Activated CD8-positive, alpha-beta memory T cell treated with anti-CD3 and anti-CD28 coated beads, Interleukin-2, amount 10 ng/mL, durations not matched to agents 7 days and 5 days (primary cell): ENCODE measurements at regions of chr12 and their contacts with region 1.

Region 1: GRCh38 chr12:64801381-64801780 is 23.1 kb upstream of the TBC1D30 start:
- DNase-seq: no peak
- ATAC-seq: no peak
- H3K4me3 Mint-ChIP-seq: no peak overlapping the region
- H3K27ac Mint-ChIP-seq: no peak overlapping the region
- H3K4me1 Mint-ChIP-seq: peaks cover 2% of the 10 kb centered on the region
- H3K27me3 Mint-ChIP-seq: peaks cover 29% of the 10 kb centered on the region

Region 2: DNA sequence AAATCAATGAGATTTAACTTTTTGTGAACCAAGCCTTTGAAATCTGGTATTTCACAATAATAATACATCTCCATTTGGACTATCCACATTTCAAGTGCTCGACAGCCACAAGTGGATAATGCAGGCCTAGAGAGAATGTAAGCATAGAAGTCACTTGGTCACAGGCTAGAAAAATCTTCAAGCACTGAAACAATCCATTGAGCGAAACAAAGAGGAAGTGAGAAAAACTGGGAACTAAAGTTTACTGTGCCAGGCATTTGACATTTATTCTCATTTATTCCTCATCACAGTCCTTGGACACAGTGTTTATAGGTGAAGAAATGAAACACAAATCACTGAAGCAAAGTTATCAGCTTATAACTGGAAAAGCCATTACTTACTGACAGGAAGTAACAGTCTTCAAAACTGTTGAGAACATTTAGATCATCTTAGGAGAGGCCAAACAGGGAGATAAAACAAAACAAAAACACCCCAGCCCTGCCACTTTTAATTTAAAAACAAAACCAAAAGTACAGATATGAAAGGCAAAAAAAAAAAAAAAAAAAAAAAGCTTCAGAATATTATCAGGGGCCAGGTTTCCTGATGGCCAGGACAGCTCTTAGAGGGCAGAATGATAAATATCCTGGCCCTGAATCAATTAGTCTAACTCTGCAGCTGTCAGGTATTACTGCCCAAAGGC is 71.3 kb before region 1 on chr12:
- CTCF ChIA-PET with region 1: no interaction called
- DNase-seq: no peak
- ATAC-seq: peak; percentile 71
- H3K4me3 Mint-ChIP-seq: peak overlapping the region; percentile 27
- H3K27ac Mint-ChIP-seq: peak overlapping the region; percentile 85
- H3K4me1 Mint-ChIP-seq: peaks cover 15% of the 10 kb centered on the region
- H3K27me3 Mint-ChIP-seq: no peaks in the 10 kb centered on the region

Region 3: GRCh38 chr12:64742416-64742815 is 59.0 kb before region 1 on chr12:
- CTCF ChIA-PET with region 1: no interaction called
- DNase-seq: no peak
- ATAC-seq: no peak
- H3K4me3 Mint-ChIP-seq: no peak overlapping the region
- H3K27ac Mint-ChIP-seq: no peak overlapping the region
- H3K4me1 Mint-ChIP-seq: peaks cover 8% of the 10 kb centered on the region
- H3K27me3 Mint-ChIP-seq: no peaks in the 10 kb centered on the region

Region 4: GRCh38 chr12:64780531-64781279 is 20.7 kb before region 1 on chr12:
- CTCF ChIA-PET with region 1: interaction called, 16 read pairs
- DNase-seq: no peak
- ATAC-seq: peak; percentile 67
- H3K4me3 Mint-ChIP-seq: peak overlapping the region; percentile 57
- H3K27ac Mint-ChIP-seq: no peak overlapping the region
- H3K4me1 Mint-ChIP-seq: peaks cover 11% of the 10 kb centered on the region
- H3K27me3 Mint-ChIP-seq: peaks cover 80% of the 10 kb centered on the region

Region 5: DNA sequence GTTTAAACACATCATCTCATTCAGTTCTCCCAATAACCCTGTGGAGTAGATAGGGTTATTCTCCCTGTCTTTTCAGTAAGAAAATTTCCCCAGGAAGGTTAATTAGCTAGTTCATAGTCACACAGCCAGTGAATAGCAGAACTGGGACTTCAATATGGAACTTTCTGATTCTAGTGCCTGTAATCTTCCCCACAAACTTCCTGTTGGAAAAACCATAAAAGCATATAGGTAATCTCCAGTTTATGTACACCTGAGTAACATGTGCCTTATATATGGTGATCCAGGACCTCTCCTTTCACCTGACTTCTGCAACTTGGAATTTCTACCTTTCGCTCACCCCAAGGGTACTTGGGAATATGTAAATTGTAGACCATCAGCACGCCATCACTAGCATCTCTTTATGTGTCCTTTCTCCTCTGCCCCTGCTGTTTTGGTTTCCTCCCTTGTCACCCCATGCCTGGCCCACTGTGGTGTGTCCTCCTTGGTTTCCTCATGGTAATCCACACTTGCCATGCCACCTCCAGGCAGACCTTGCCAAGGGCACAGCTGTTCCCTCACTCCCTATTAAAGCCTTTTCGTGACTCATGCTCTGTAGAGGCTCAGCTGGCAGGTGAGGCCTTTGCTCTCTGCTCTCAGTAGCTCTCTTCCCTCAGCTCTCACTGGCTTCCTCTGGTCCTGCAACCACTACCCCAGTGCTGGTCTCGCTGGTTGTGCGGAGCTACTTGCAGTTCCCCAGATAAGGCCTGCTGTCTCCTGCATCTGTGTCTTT is 39.8 kb after region 1 on chr12:
- CTCF ChIA-PET with region 1: no interaction called
- DNase-seq: no peak
- ATAC-seq: no peak
- H3K4me3 Mint-ChIP-seq: no peak overlapping the region
- H3K27ac Mint-ChIP-seq: no peak overlapping the region
- H3K4me1 Mint-ChIP-seq: no peaks in the 10 kb centered on the region
- H3K27me3 Mint-ChIP-seq: peaks cover 5% of the 10 kb centered on the region

Region 6: GRCh38 chr12:65074932-65075331 is 273.6 kb after region 1 on chr12:
- CTCF ChIA-PET with region 1: no interaction called
- DNase-seq: no peak
- ATAC-seq: no peak
- H3K4me3 Mint-ChIP-seq: no peak overlapping the region
- H3K27ac Mint-ChIP-seq: no peak overlapping the region
- H3K4me1 Mint-ChIP-seq: no peaks in the 10 kb centered on the region
- H3K27me3 Mint-ChIP-seq: peaks cover 28% of the 10 kb centered on the region